ENCODE measurements at regions of chr6 and their contacts with region 1.

Region 1: GRCh38 chr6:28940858-28941680 is 17.3 kb upstream of the TRIM27 start:
- DNase-seq: peak; percentile 89
- ATAC-seq: peak; percentile 73
- H3K4me3 ChIP-seq: peak overlapping the region; percentile 68 to 85 (median 79)
- H3K27ac ChIP-seq: peak overlapping the region; percentile 63
- H3K4me1 ChIP-seq: peaks cover 44% of the 10 kb centered on the region
- H3K27me3 ChIP-seq: peaks cover 0 to 7% of the 10 kb centered on the region in 2 experiments; a peak in 1 of 5 replicates
- CTCF ChIP-seq: peak; percentile 13
- EP300 ChIP-seq: no peak
- POLR2A ChIP-seq: no peak
- RAD21 ChIP-seq: no peak

Region 2: DNA sequence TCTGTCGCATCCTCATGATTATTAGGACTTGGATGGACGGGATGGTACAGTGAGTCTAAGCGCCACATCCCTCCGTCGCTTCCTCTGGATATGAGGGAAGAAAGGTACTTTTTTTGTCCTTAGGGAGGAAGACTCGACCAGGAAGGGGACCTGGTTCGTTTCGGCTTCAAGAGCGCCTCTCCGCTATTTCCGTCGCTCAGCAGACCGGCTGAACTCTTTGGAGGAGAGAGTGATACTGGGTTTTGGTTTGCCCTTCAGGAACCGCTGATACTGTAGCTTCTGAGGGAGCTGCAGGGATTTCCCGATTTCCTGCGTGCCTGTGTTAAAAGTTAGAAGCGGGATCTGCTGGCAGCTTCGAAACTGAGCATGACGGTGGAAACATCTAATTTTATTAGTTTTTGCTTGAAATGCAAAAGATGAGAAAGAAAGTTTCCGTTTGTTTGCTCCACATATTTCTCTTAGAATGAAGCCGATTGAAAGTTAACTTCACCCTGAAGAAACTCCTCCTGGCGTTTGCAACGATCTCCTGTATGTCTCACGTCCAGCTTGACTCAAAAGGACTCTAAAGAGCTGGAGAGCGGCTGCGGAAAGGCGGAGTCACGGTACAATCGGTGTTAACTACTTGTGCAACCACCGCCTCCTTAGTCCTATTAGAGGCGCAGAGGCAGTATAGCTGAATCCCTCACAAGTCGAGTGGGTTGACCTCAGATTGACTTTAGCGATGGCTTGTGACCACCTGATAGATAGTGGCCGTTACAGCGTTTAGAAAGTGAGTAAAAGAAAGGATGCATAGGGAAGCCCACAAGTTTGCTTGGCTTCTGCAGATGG is 146.7 kb before region 1 on chr6:
- CTCF ChIA-PET with region 1: no interaction called
- POLR2A ChIA-PET with region 1: no interaction called
- in situ Hi-C with region 1: no loop called
- intact Hi-C with region 1: loop called (anchors 5 kb)
- DNase-seq: peak; percentile 29
- ATAC-seq: peak; percentile 47
- H3K4me3 ChIP-seq: peak overlapping the region; percentile 42 to 62 (median 57)
- H3K27ac ChIP-seq: no peak overlapping the region
- H3K4me1 ChIP-seq: peaks cover 65% of the 10 kb centered on the region
- H3K27me3 ChIP-seq: no peaks in the 10 kb centered on the region; a peak in 3 of 5 replicates
- CTCF ChIP-seq: no peak
- EP300 ChIP-seq: no peak
- POLR2A ChIP-seq: no peak
- RAD21 ChIP-seq: no peak

Region 3: GRCh38 chr6:28880894-28881780 is 59.9 kb before region 1 on chr6:
- CTCF ChIA-PET with region 1: no interaction called
- POLR2A ChIA-PET with region 1: interaction called, 3 read pairs
- in situ Hi-C with region 1: no loop called
- intact Hi-C with region 1: loop called (anchors 5 kb)
- DNase-seq: peak; percentile 82
- ATAC-seq: peak; percentile 27
- H3K4me3 ChIP-seq: peak overlapping the region; percentile 38 to 63 (median 59)
- H3K27ac ChIP-seq: no peak overlapping the region
- H3K4me1 ChIP-seq: peaks cover 62% of the 10 kb centered on the region
- H3K27me3 ChIP-seq: no peaks in the 10 kb centered on the region
- CTCF ChIP-seq: no peak
- EP300 ChIP-seq: no peak
- POLR2A ChIP-seq: no peak
- RAD21 ChIP-seq: no peak

Region 4: GRCh38 chr6:28929887-28930620 is 11.0 kb before region 1 on chr6:
- CTCF ChIA-PET with region 1: no interaction called
- POLR2A ChIA-PET with region 1: no interaction called
- in situ Hi-C with region 1: no loop called
- intact Hi-C with region 1: no loop called
- DNase-seq: no peak
- ATAC-seq: no peak
- H3K4me3 ChIP-seq: no peak overlapping the region
- H3K27ac ChIP-seq: no peak overlapping the region
- H3K4me1 ChIP-seq: peaks cover 4% of the 10 kb centered on the region; the same call in 1 of the 2 replicates
- H3K27me3 ChIP-seq: no peaks in the 10 kb centered on the region; a peak in 1 of 5 replicates
- CTCF ChIP-seq: no peak
- EP300 ChIP-seq: no peak
- POLR2A ChIP-seq: no peak
- RAD21 ChIP-seq: no peak

Region 5: DNA sequence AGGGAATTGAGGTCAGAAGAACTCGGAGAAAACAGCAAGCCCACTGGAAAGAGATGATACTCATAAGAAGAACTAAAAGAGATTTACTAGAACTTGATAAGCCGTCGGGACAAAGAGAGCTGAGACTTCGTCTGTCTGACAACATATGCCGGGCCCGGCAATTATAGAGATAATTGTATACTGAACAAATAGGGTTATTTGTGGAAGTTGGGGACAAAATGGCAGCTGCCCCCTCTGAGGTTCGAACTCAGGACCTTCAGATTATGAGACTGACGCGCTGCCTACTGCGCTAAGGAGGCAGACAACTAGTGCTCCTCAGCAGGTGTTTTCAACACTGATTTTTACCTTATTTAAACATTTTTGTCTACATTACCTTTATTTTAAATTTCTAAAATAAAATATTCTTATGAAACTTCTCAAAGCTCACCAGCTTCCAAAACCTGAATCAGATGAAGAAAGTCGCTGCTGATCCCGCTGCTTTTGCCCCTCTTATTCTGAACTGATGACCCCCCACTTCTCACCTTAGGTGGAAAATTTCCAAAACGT is 12.0 kb after region 1 on chr6:
- CTCF ChIA-PET with region 1: no interaction called
- POLR2A ChIA-PET with region 1: no interaction called
- in situ Hi-C with region 1: no loop called
- intact Hi-C with region 1: loop called (anchors 1 kb)
- DNase-seq: peak; percentile 74
- ATAC-seq: peak; percentile 30
- H3K4me3 ChIP-seq: peak overlapping the region; percentile 76 to 96 (median 79)
- H3K27ac ChIP-seq: peak overlapping the region; percentile 68
- H3K4me1 ChIP-seq: peaks cover 48% of the 10 kb centered on the region
- H3K27me3 ChIP-seq: peaks cover 0 to 6% of the 10 kb centered on the region in 2 experiments; a peak in 1 of 5 replicates
- CTCF ChIP-seq: 0 out of 2 replicates have a peak, but pooled peaks have one; percentile 6
- EP300 ChIP-seq: 0 out of 4 replicates have a peak, but pooled peaks of 1 of the 2 experiments have one; percentile 14
- POLR2A ChIP-seq: no peak
- RAD21 ChIP-seq: peak; percentile 17; the same call in 1 of the 2 replicates

Region 6: GRCh38 chr6:29016559-29017427 is 75.7 kb after region 1 on chr6:
- CTCF ChIA-PET with region 1: interaction called, 6 read pairs
- POLR2A ChIA-PET with region 1: no interaction called
- in situ Hi-C with region 1: loop called (anchors 5 kb)
- intact Hi-C with region 1: loop called (anchors 1 kb)
- DNase-seq: peak; percentile 80
- ATAC-seq: peak; percentile 90
- H3K4me3 ChIP-seq: peak overlapping the region; percentile 67 to 82 (median 70)
- H3K27ac ChIP-seq: peak overlapping the region; percentile 15
- H3K4me1 ChIP-seq: peaks cover 22% of the 10 kb centered on the region
- H3K27me3 ChIP-seq: no peaks in the 10 kb centered on the region; a peak in 2 of 5 replicates
- CTCF ChIP-seq: peak; percentile 82
- EP300 ChIP-seq: no peak
- POLR2A ChIP-seq: no peak
- RAD21 ChIP-seq: peak; percentile 81

Region 7: DNA sequence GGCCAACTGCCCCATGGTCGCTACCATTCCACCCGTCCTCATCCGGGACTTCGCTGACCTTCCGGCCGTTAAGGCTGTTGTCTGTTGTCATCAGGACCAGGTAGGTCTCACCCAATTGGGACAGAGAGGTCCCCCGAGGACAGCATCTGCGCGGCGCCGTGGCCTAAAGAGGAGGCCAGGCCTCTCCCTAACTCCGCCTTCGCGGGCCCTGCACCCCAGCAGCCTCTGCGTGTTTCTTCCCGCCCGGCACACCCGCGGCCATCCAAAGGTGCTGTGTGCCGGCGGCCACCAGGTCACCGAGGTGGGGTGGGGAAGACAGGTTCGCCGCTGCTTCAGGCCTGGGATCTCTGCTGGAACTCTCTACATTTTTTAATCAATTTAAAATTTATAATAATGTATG is 94.9 kb after region 1 on chr6:
- CTCF ChIA-PET with region 1: no interaction called
- POLR2A ChIA-PET with region 1: no interaction called
- in situ Hi-C with region 1: no loop called
- intact Hi-C with region 1: no loop called
- DNase-seq: no peak
- ATAC-seq: no peak
- H3K4me3 ChIP-seq: no peak overlapping the region
- H3K27ac ChIP-seq: no peak overlapping the region
- H3K4me1 ChIP-seq: no peaks in the 10 kb centered on the region
- H3K27me3 ChIP-seq: no peaks in the 10 kb centered on the region
- CTCF ChIP-seq: no peak
- EP300 ChIP-seq: no peak
- POLR2A ChIP-seq: no peak
- RAD21 ChIP-seq: no peak